Heart left ventricle (tissue), 16 donors: ENCODE measurements at regions of chrX and their contacts with region 1.

Region 1: DNA sequence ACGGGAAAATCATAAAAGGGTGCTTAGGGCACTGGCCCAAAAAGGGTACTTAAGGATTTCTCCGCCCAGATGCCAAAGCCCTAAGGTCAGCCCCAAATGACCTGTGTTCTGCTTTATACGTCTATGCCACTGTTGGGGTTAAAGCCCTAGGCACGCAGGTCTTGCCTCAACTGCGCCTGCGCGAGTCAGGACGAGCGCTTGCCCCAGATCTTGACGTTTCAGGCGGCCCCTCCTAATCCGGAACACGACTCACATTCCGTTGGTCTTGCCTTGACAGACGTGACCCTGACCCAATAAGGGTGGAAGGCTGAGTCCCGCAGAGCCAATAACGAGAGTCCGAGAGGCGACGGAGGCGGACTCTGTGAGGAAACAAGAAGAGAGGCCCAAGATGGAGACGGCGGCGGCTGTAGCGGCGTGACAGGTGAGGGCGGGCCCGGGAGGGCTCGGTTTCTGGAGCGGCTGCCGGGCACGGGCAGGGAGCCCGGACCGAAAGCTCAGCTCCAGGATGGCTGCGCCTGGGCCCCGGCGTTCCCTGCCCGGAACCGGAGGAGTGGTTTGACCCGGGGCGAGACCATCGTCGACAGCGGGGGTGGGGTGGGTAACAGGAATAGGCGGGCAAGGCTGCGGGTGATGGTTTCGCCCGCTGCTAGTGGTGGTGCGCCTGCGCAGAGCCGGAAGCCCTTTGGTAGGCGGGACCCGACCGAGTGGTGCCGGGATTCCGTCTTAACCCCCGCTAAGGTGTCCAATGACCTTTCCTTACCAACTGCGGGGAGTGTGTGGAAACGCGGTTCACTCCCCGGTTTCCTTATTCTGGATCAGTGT is at the start of gene ARAF:
- DNase-seq: peak; percentile 97 to 98 (median 97)
- ATAC-seq: peak; percentile 91 to 95 (median 94)
- H3K4me3 ChIP-seq: peak within 1 kb of the TSS; percentile 28 to 95 (median 68)
- H3K27ac ChIP-seq: peak within 1 kb of the TSS; percentile 91 to 100 (median 97)
- H3K4me1 ChIP-seq: peaks cover 0 to 32% (median 7%) of the 10 kb centered on the region in 12 donors
- H3K27me3 ChIP-seq: no peaks in the 10 kb centered on the region
- CTCF ChIP-seq: no peak
- POLR2A ChIP-seq: peak in 1 of 2 donors; percentile 54
- total RNA-seq, gene ARAF: 68.3 to 97.6 (median 85.1) TPM

Region 2: GRCh38 chrX:47540754-47541538 is 20.1 kb before region 1 on chrX:
- intact Hi-C with region 1: loop called in 1 of 10 experiments (anchors 2 kb)
- DNase-seq: peak; percentile 63 to 86 (median 82)
- ATAC-seq: peak; percentile 98 to 99 (median 98)
- H3K4me3 ChIP-seq: no peak overlapping the region
- H3K27ac ChIP-seq: peak overlapping the region; percentile 32 to 87 (median 74)
- H3K4me1 ChIP-seq: peaks cover 0 to 20% (median 0%) of the 10 kb centered on the region in 12 donors
- H3K27me3 ChIP-seq: no peaks in the 10 kb centered on the region
- CTCF ChIP-seq: peak; percentile 24 to 72 (median 58)
- POLR2A ChIP-seq: peak in 1 of 2 donors; percentile 38

Region 3: DNA sequence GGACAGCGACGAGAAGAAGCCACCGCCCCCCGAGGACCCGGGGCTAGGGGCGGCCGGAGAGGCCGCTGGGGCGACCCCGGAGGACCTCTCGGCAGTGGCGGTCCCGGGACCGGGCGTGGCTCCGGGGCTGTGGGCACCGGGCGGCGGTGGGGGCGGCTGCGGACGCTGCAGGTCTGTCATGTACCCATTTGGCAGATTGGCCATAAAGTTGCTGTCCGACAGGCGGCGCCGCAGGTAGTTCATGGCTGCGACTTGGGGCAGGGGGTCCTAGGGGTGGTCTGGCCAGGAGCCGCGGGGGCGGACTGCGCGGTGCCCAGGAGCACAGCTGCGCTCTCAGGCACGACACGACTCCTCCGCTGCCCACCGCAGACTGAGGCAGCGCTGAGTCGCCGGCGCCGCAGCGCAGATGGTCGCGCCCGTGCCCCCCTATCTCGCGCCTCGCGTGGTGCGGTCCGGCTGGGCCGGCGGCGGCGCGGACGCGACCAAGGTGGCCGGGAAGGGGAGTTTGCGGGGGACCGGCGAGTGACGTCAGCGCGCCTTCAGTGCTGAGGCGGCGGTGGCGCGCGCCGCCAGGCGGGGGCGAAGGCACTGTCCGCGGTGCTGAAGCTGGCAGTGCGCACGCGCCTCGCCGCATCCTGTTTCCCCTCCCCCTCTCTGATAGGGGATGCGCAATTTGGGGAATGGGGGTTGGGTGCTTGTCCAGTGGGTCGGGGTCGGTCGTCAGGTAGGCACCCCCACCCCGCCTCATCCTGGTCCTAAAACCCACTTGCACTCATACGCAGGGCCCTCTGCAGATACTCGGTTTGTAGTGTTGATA is 58.7 kb after region 1 on chrX and contains the start of gene SYN1:
- intact Hi-C with region 1: loop called in 2 of 10 experiments (anchors 10 kb)
- DNase-seq: peak; percentile 79 to 90 (median 85)
- ATAC-seq: peak; percentile 67 to 95 (median 93)
- H3K4me3 ChIP-seq: peak within 1 kb of the TSS in 10 of 12 donors; percentile 9 to 60 (median 42)
- H3K27ac ChIP-seq: no peak within 1 kb of the TSS
- H3K4me1 ChIP-seq: peaks cover 0 to 6% (median 0%) of the 10 kb centered on the region in 12 donors
- H3K27me3 ChIP-seq: peaks cover 0 to 14% (median 0%) of the 10 kb centered on the region in 9 donors
- CTCF ChIP-seq: peak in 6 of 12 donors; percentile 7 to 61 (median 28)
- POLR2A ChIP-seq: no peak
- total RNA-seq, gene SYN1: 7.1 to 20.5 (median 11.2) TPM

Region 4: GRCh38 chrX:47637546-47638195 is 76.6 kb after region 1 on chrX:
- intact Hi-C with region 1: loop called in 6 of 10 experiments (anchors 5 to 10 kb)
- DNase-seq: peak in 4 of 5 donors; percentile 33 to 54 (median 42)
- ATAC-seq: peak in 3 of 4 donors; percentile 83 to 92 (median 85)
- H3K4me3 ChIP-seq: peak overlapping the region in 6 of 12 donors; percentile 21 to 49 (median 40)
- H3K27ac ChIP-seq: no peak overlapping the region
- H3K4me1 ChIP-seq: peaks cover 0 to 4% (median 0%) of the 10 kb centered on the region in 12 donors
- H3K27me3 ChIP-seq: no peaks in the 10 kb centered on the region
- CTCF ChIP-seq: peak in 2 of 12 donors; percentile 4 to 24
- POLR2A ChIP-seq: no peak

Region 5: GRCh38 chrX:47644557-47645091 is 83.6 kb after region 1 on chrX:
- intact Hi-C with region 1: loop called in 6 of 10 experiments (anchors 5 to 10 kb)
- DNase-seq: no peak
- ATAC-seq: peak; percentile 60 to 81 (median 66)
- H3K4me3 ChIP-seq: no peak overlapping the region
- H3K27ac ChIP-seq: peak overlapping the region in 1 of 12 donors; percentile 10
- H3K4me1 ChIP-seq: peaks cover 0 to 17% (median 7%) of the 10 kb centered on the region in 12 donors
- H3K27me3 ChIP-seq: peaks cover 0 to 4% (median 0%) of the 10 kb centered on the region in 9 donors
- CTCF ChIP-seq: peak in 10 of 12 donors; percentile 10 to 45 (median 32)
- POLR2A ChIP-seq: no peak

Region 6: GRCh38 chrX:48789366-48790220 is 1228.6 kb after region 1 on chrX:
- intact Hi-C with region 1: no loop called
- DNase-seq: no peak
- ATAC-seq: no peak
- H3K4me3 ChIP-seq: no peak overlapping the region
- H3K27ac ChIP-seq: no peak overlapping the region
- H3K4me1 ChIP-seq: no peaks in the 10 kb centered on the region
- H3K27me3 ChIP-seq: peaks cover 0 to 29% (median 0%) of the 10 kb centered on the region in 9 donors
- CTCF ChIP-seq: no peak
- POLR2A ChIP-seq: no peak